A673 (cell line): ENCODE measurements at regions of chr3 and their contacts with region 1.

Region 1: GRCh38 chr3:115217678-115218451 is 70.8 kb upstream of the ZBTB20 start:
- DNase-seq: peak; percentile 76
- H3K4me3 ChIP-seq: no peak overlapping the region
- H3K27ac ChIP-seq: no peak overlapping the region
- H3K4me1 ChIP-seq: no peaks in the 10 kb centered on the region
- H3K27me3 ChIP-seq: no peaks in the 10 kb centered on the region
- CTCF ChIP-seq: peak; percentile 84

Region 2: DNA sequence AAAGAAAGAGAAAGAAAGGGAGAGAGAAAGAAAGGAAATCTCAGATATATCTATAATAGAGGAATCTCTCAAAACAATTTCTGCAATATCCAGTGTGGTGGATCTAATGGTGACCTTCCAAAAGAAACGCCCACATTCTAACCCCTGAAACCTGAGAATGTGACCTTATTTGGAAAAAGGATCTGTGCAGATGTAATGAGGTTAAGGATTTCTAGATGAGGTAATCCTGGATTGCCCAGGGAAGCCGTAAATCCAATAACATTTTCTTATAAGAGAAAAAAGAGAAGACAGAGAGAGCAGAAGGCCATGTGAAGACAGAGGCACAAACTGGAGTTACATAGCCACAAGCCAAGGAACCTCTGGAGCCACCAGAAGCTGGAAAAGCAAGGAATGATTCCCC is 378.4 kb before region 1 on chr3:
- CTCF ChIA-PET with region 1: no interaction called
- POLR2A ChIA-PET with region 1: no interaction called
- intact Hi-C with region 1: loop called (anchors 10 kb)
- DNase-seq: no peak
- H3K4me3 ChIP-seq: no peak overlapping the region
- H3K27ac ChIP-seq: no peak overlapping the region
- H3K4me1 ChIP-seq: no peaks in the 10 kb centered on the region
- H3K27me3 ChIP-seq: no peaks in the 10 kb centered on the region
- CTCF ChIP-seq: no peak

Region 3: GRCh38 chr3:115092220-115092791 is 125.6 kb before region 1 on chr3:
- CTCF ChIA-PET with region 1: no interaction called
- POLR2A ChIA-PET with region 1: no interaction called
- intact Hi-C with region 1: loop called (anchors 5 kb)
- DNase-seq: peak; percentile 76
- H3K4me3 ChIP-seq: no peak overlapping the region
- H3K27ac ChIP-seq: no peak overlapping the region
- H3K4me1 ChIP-seq: no peaks in the 10 kb centered on the region
- H3K27me3 ChIP-seq: no peaks in the 10 kb centered on the region
- CTCF ChIP-seq: peak; percentile 77

Region 4: DNA sequence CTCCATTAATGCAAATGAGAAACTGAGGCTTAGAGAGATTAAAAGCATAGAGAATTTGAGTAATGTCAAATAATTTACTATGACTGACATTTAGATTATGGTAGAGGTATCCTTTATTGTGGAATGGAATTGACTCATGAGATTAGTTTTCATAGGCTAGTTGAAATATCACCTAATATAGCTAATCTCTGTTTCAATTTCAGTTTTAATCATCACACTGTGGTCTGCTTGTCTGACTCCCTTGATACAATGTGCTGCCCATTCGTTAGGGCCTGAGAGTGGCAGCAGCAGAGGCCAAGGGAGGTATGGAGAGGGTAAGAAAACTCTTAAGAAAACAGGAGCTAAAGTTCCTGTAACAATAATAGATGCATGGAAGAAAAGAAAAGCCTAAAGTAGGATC is 57.6 kb before region 1 on chr3:
- CTCF ChIA-PET with region 1: no interaction called
- POLR2A ChIA-PET with region 1: no interaction called
- intact Hi-C with region 1: no loop called
- DNase-seq: no peak
- H3K4me3 ChIP-seq: no peak overlapping the region
- H3K27ac ChIP-seq: no peak overlapping the region
- H3K4me1 ChIP-seq: no peaks in the 10 kb centered on the region
- H3K27me3 ChIP-seq: no peaks in the 10 kb centered on the region
- CTCF ChIP-seq: no peak

Region 5: DNA sequence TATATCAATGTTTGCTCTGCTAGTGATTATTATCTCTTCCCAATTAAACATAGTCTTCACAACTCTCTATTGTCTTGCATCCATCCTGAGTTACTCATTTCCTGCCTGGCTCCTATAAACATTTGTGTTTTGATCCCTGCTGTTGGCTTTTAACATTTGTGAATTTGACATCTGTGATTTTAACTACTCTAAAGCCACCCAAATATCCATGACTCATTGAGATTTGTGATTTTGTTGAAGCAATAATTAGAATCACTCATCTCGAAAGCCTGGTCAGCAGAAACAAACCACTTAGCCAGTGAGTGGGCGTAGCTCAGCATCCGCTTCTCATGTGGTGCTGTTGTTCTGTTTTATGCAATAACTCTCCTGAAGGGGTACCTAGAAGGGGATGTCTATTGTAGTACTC is 103.5 kb after region 1 on chr3:
- CTCF ChIA-PET with region 1: no interaction called
- POLR2A ChIA-PET with region 1: no interaction called
- intact Hi-C with region 1: loop called (anchors 5 kb)
- DNase-seq: peak; percentile 97
- H3K4me3 ChIP-seq: no peak overlapping the region
- H3K27ac ChIP-seq: no peak overlapping the region
- H3K4me1 ChIP-seq: peaks cover 32% of the 10 kb centered on the region
- H3K27me3 ChIP-seq: no peaks in the 10 kb centered on the region
- CTCF ChIP-seq: no peak

Region 6: DNA sequence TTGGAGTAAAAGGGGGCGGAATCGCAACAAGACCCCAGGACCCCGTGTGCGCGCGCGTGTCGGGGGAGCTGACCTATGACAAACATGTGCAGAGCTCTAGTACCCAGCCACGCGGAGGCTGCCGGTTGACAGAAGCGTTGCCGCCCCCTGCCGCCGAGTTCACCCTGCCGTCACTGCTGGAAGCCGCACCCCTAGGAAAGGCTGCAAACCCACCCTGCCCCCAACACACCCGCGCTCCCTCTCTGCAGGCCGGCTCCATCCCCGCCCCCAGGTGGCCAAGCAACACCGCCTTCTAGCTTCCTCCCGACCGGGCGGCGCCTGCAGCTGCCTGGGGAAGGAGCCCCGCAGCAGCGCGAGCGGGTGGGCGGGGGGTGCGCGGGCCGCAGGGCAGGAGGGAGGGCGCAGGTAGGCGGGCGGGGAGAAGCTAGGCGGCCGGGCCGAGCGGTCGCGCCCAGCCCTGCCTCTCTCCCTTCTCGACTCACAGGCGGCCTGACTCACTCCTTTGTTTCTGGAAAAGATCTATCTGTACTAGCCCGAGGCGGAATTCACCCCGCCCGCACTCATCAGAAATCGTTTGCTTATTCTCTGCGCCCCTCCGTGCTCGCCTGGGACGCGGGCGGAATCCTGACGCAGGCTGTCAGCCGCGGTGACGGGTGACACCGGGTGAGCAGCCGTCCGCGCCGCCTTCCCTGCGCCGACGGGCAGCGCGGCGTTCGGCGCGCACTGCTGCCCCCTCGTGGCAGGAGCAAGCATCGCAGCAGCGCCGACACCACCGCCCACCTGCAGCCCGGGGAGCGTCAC is 566.3 kb after region 1 on chr3:
- CTCF ChIA-PET with region 1: interaction called, 8 read pairs
- POLR2A ChIA-PET with region 1: no interaction called
- intact Hi-C with region 1: loop called (anchors 1 kb)
- DNase-seq: peak; percentile 96
- H3K4me3 ChIP-seq: peak overlapping the region; percentile 74
- H3K27ac ChIP-seq: peak overlapping the region; percentile 73
- H3K4me1 ChIP-seq: peaks cover 3% of the 10 kb centered on the region
- H3K27me3 ChIP-seq: no peaks in the 10 kb centered on the region
- CTCF ChIP-seq: peak; percentile 99

Region 7: DNA sequence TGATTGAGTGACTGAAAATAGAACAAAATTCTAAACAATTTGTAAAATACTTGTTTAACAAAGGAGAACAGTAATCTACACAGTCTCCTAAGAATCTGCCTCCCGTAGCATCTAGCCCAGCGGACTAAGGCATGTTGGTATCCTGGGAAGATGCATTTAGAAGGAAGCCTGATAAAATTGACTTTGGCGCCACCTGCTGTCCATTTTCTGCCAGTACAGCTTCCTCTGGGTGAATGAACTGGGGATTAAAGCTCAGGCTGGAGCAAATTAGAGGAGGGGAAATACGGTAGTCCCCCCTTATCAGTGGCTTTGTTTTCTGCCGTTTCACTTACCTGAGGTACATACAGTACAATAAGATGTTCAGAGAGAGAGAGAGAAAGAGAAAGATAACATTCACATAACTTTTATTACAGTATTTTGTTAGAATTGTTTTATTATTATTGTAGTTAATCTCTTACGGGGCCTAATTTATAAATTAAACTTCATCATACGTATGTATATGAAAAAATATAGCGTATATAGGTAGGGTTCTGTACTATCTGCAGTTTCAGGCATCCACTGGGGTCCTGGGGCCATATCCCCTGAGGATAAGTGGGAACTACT is 597.0 kb after region 1 on chr3:
- CTCF ChIA-PET with region 1: interaction called, 4 read pairs
- POLR2A ChIA-PET with region 1: no interaction called
- intact Hi-C with region 1: loop called (anchors 1 kb)
- DNase-seq: peak; percentile 88
- H3K4me3 ChIP-seq: no peak overlapping the region
- H3K27ac ChIP-seq: no peak overlapping the region
- H3K4me1 ChIP-seq: no peaks in the 10 kb centered on the region
- H3K27me3 ChIP-seq: no peaks in the 10 kb centered on the region
- CTCF ChIP-seq: peak; percentile 90